ENCODE measurements at regions of chr3 and their contacts with region 1.

Region 1: GRCh38 chr3:128426128-128426921 is 40.4 kb downstream of the DNAJB8 start:
- ATAC-seq: peak; percentile 84 to 93 (median 90)
- H3K4me3 ChIP-seq: peak overlapping the region in 4 of 5 donors; percentile 12 to 25 (median 22)
- H3K27ac ChIP-seq: no peak overlapping the region
- H3K4me1 ChIP-seq: peaks cover 1 to 6% of the 10 kb centered on the region in 2 donors

Region 2: DNA sequence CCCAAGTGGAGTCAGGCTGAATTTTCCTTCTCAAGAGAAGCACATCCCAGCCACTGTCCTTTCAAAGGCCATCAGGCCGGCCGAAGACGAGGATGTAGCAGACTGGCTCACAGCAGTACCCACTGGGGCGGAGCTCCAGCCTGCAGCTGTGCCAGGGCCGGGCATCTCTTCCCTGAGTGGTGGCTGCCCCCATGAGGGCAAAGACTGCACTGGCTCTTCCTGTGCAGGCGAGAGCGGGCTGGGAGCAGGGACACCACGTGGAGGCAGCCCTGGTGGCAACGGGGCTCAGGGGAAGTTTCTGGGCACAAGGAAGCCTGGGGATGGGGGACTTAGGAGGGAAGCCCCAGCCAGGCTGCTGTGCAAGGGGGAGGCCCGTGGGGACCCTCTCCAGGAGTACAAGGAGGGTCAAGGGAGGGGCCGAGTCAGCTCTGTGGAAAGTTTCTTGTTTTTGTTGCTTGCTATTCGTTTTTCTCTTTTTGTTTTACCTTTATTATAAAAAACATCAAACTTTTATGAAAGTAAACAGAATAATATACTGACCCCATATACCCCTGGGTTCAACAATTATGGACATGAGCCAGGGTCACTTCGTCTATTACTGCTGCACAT is 158.2 kb after region 1 on chr3:
- in situ Hi-C with region 1: loop called in 1 of 9 experiments (anchors 25 kb)
- ATAC-seq: peak; percentile 69 to 100 (median 99)
- H3K4me3 ChIP-seq: no peak overlapping the region
- H3K27ac ChIP-seq: no peak overlapping the region
- H3K4me1 ChIP-seq: no peaks in the 10 kb centered on the region

Region 3: DNA sequence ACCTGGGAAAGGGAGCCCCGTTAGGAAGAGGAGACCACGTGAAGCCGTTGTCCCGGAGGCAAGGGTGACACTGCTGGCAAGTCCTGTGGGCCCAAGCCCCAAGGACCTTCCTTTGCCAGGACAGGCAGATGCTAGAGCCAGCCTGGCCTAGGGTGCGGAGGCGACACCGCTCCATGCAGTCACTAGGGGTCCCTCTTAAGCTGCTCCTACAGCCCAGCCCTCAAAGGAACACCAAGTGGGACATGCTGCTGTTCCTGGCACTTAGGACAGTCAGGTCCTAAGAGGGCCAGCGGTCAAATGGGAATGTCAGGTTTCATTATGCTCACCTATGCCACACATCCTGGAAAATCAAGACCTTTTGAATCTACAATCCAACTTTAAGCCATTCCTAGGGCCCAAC is 164.6 kb after region 1 on chr3:
- in situ Hi-C with region 1: loop called in 2 of 9 experiments (anchors 10 to 25 kb)
- ATAC-seq: peak in 1 of 8 experiments; percentile 40
- H3K4me3 ChIP-seq: no peak overlapping the region
- H3K27ac ChIP-seq: no peak overlapping the region
- H3K4me1 ChIP-seq: peaks cover 0 to 3% of the 10 kb centered on the region in 2 donors

Region 4: GRCh38 chr3:128617557-128618397 is 191.5 kb after region 1 on chr3:
- in situ Hi-C with region 1: loop called in 1 of 9 experiments (anchors 25 kb)
- ATAC-seq: peak; percentile 87 to 96 (median 93)
- H3K4me3 ChIP-seq: peak overlapping the region; percentile 58 to 92 (median 67)
- H3K27ac ChIP-seq: peak overlapping the region; percentile 69 to 91
- H3K4me1 ChIP-seq: peaks cover 5 to 12% of the 10 kb centered on the region in 2 donors

Region 5: DNA sequence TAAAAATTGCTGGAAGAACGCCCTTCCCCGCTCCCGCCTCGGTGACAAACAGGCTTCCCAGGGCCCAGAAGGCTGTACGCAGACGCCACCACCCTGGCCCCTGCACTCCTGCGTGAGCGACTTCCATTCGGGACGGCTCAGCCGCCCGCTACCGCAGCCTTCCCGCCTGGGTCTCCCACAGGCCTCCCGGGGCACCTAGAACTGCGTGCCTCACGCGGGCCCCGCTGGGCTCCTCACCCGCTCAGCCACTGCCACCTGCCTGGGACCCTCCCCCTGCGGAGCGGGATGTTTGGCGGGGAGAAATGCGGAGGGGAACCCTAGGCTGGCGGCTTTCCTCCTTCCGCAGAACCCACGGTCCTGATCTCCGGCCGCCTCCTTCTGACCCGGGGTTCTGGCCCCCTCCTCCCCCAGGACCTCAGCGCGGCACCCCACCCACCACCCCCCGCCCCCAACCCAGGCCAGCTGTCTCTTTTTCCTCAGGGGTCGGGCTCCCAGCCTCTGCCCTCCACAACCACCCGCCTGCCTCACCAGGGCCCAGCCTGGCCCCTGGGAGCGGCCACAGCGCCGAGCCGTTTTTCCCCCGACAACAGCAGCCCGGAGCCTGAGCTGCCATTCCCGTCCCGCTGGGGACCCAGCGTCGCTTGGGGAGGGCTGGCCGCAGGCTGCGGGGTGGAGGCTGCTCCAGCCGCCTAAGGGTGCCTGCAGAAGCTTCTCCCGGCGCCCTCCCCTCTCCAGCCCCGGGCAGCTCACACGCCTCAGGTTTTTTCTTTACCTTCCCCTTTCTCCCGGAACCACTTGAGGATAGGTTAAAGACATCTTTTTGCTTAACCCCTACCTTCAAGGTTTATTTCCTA is 272.1 kb after region 1 on chr3:
- in situ Hi-C with region 1: no loop called
- ATAC-seq: peak in 6 of 8 experiments; percentile 38 to 90 (median 74)
- H3K4me3 ChIP-seq: no peak overlapping the region
- H3K27ac ChIP-seq: no peak overlapping the region
- H3K4me1 ChIP-seq: peaks cover 4 to 5% of the 10 kb centered on the region in 2 donors